PC-9 (cell line): ENCODE measurements at regions of chr5 and their contacts with region 1.

Region 1: GRCh38 chr5:171336521-171337209 is 27.6 kb downstream of the TLX3 start:
- DNase-seq: peak; percentile 46 to 62
- H3K4me3 ChIP-seq: peak overlapping the region; percentile 48
- H3K27ac ChIP-seq: no peak overlapping the region
- H3K4me1 ChIP-seq: 0 out of 2 replicates have a peak, but pooled peaks cover 6% of the 10 kb centered on the region
- H3K27me3 ChIP-seq: no peaks in the 10 kb centered on the region
- CTCF ChIP-seq: peak; percentile 78

Region 2: GRCh38 chr5:170638454-170639220 is 698.0 kb before region 1 on chr5:
- CTCF ChIA-PET with region 1: no interaction called
- POLR2A ChIA-PET with region 1: no interaction called
- intact Hi-C with region 1: loop called (anchors 1 kb)
- DNase-seq: peak; percentile 43 to 73
- H3K4me3 ChIP-seq: no peak overlapping the region
- H3K27ac ChIP-seq: no peak overlapping the region
- H3K4me1 ChIP-seq: peaks cover 11% of the 10 kb centered on the region
- H3K27me3 ChIP-seq: no peaks in the 10 kb centered on the region; the same call in 1 of the 2 replicates
- CTCF ChIP-seq: peak; percentile 96

Region 3: DNA sequence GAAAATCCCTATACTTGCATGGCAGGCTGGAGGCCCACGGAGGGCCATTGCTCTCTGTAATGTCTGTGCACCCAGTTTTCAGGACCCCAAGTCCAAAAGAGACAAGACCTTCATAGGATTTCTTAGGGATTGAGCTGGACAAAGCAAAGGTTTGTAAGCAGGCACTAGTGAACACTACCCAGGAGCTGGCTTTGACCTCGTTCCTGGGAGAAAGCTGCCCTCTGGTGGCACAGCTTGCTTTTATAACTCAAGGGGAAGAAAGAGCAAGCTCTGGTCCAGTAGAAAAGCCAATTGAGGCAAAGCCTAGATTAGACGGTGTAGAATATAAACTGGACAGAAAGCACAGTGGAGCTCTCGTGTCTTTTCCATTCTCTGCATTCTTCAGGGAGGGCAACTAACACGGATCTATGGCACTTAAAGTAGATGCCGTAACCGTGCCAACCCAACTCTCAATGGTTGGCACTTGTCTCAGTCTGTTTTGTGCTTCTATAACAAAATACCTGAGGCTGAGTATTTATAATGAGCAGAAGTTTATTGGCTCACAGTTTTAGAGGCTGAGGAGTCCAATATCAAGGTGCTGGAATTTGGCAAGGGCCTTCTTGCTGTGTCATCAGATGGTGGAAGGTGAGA is 545.2 kb before region 1 on chr5:
- CTCF ChIA-PET with region 1: no interaction called
- POLR2A ChIA-PET with region 1: no interaction called
- intact Hi-C with region 1: loop called (anchors 5 kb)
- DNase-seq: peak; percentile 56 to 78
- H3K4me3 ChIP-seq: no peak overlapping the region
- H3K27ac ChIP-seq: no peak overlapping the region
- H3K4me1 ChIP-seq: 0 out of 2 replicates have a peak, but pooled peaks cover 3% of the 10 kb centered on the region
- H3K27me3 ChIP-seq: no peaks in the 10 kb centered on the region
- CTCF ChIP-seq: peak; percentile 91

Region 4: DNA sequence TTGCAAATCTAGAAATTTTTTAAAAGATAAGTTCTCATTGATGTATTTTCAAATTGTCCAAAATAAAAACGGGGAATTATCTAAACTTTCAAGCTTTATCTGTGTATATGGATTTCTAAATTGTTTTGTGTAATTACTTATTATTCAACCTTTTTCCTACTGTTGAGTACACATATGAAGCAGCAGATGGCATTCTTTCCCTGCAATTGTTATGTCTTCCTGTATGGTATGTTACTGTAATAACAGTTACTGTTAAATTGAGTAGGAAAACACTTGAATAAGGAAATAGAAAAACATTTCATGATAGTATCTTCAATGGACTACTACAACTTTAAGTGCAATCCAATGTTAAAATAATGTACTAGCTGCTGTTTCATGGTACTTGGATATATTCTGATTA is 350.1 kb before region 1 on chr5:
- CTCF ChIA-PET with region 1: interaction called, 3 read pairs
- POLR2A ChIA-PET with region 1: no interaction called
- intact Hi-C with region 1: loop called (anchors 2 kb)
- DNase-seq: no peak
- H3K4me3 ChIP-seq: no peak overlapping the region
- H3K27ac ChIP-seq: no peak overlapping the region
- H3K4me1 ChIP-seq: no peaks in the 10 kb centered on the region
- H3K27me3 ChIP-seq: no peaks in the 10 kb centered on the region
- CTCF ChIP-seq: peak; percentile 48

Region 5: DNA sequence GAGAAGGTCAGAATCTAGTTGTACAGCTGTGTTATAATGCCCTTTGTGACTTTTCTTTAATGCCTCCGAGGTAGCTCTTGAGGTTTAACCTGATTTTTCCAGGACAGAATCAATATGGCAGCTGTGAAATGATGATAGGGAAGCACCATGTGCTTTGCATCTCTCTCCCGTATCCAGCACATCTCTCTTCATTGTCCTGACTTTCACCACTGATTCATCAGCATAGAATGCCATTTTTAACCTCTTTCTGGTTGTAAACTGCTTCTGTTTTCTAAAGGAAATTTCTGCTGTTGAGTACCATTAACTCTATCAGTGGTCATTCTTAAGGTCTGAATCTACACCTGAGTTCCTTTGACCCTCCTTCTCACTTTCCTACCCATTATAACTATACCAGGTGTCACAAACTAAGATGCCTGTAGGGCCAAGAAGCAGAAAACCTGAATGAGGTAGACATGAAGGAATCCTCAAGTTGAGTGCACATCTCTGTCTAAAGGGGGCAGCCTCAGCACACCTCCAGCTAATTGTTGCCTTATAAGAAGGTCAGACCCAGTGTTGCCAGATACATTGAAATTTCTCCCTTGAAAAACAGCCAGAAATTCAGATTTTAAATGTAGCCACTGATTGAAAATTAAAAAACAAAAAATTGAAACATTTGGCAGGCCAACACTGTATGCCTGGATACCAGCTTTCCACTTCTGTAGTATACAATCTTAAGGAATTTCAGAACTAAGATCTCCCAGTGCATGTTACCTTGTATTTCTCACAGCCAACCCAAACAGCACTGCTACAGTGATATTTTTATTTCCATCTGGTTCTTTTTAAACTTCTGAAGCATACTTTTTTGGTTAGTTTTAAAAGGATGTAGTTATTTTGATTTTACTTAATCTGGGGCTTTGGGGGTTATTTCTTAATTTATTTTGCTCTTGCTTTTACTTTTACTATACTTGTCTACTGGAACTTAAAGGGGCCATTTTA is 63.4 kb before region 1 on chr5:
- CTCF ChIA-PET with region 1: no interaction called
- POLR2A ChIA-PET with region 1: no interaction called
- intact Hi-C with region 1: loop called (anchors 1 kb)
- DNase-seq: peak in 1 of 2 experiments; percentile 14
- H3K4me3 ChIP-seq: no peak overlapping the region
- H3K27ac ChIP-seq: no peak overlapping the region
- H3K4me1 ChIP-seq: peaks cover 22% of the 10 kb centered on the region
- H3K27me3 ChIP-seq: no peaks in the 10 kb centered on the region
- CTCF ChIP-seq: peak; percentile 48; the same call in 1 of the 2 replicates

Region 6: DNA sequence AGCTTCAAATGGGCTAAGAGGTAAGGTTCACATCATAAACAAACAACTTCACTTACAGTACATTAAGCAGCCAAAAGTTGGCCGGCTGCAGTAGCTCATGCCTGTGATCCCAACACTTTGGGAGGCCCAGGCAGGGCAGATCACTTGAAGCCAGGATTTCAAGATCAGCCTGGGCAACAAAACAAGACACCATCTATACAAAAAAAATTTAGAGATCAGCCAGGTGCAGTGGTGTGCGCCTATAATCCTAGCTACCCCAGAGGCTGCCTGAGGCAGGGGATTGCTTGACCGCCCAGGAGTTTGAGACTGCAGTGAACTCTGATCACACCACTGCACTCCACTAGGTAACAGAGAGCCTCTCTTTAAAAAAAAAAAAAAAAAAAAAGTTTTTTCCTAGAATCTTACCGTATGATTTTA is 930.0 kb after region 1 on chr5:
- CTCF ChIA-PET with region 1: no interaction called
- POLR2A ChIA-PET with region 1: no interaction called
- intact Hi-C with region 1: no loop called
- DNase-seq: no peak
- H3K4me3 ChIP-seq: no peak overlapping the region
- H3K27ac ChIP-seq: 0 out of 2 replicates have a peak overlapping the region, but pooled peaks have one; percentile 17
- H3K4me1 ChIP-seq: no peaks in the 10 kb centered on the region
- H3K27me3 ChIP-seq: no peaks in the 10 kb centered on the region
- CTCF ChIP-seq: no peak